ENCODE measurements at regions of chr18 and their contacts with region 1.

Region 1: GRCh38 chr18:31929273-31929672 is 13.7 kb downstream of the TRAPPC8 start:
- DNase-seq: no peak
- ATAC-seq: no peak
- H3K4me3 ChIP-seq: no peak overlapping the region
- H3K4me3 Mint-ChIP-seq: no peak overlapping the region
- H3K27ac ChIP-seq: no peak overlapping the region
- H3K27ac Mint-ChIP-seq: no peak overlapping the region
- H3K4me1 ChIP-seq: peaks cover 0 to 4% of the 10 kb centered on the region in 2 experiments
- H3K4me1 Mint-ChIP-seq: peaks cover 27 to 32% (median 31%) of the 10 kb centered on the region in 3 donors
- H3K27me3 ChIP-seq: no peaks in the 10 kb centered on the region
- H3K27me3 Mint-ChIP-seq: no peaks in the 10 kb centered on the region

Region 2: GRCh38 chr18:32086861-32087260 is 157.6 kb after region 1 on chr18:
- CTCF ChIA-PET with region 1: no interaction called
- POLR2A ChIA-PET with region 1: interaction called in 1 of 2 experiments, 17 read pairs
- DNase-seq: no peak
- ATAC-seq: no peak
- H3K4me3 ChIP-seq: no peak overlapping the region
- H3K4me3 Mint-ChIP-seq: no peak overlapping the region
- H3K27ac ChIP-seq: no peak overlapping the region
- H3K27ac Mint-ChIP-seq: peak overlapping the region in 1 of 2 donors; percentile 13
- H3K4me1 ChIP-seq: peaks cover 22 to 35% of the 10 kb centered on the region in 2 experiments
- H3K4me1 Mint-ChIP-seq: peaks cover 40 to 50% (median 49%) of the 10 kb centered on the region in 3 donors
- H3K27me3 ChIP-seq: no peaks in the 10 kb centered on the region
- H3K27me3 Mint-ChIP-seq: peaks cover 0 to 1% of the 10 kb centered on the region in 2 donors